Tibial artery (tissue), 4 donors: ENCODE measurements at regions of chr1 and their contacts with region 1.

Region 1: DNA sequence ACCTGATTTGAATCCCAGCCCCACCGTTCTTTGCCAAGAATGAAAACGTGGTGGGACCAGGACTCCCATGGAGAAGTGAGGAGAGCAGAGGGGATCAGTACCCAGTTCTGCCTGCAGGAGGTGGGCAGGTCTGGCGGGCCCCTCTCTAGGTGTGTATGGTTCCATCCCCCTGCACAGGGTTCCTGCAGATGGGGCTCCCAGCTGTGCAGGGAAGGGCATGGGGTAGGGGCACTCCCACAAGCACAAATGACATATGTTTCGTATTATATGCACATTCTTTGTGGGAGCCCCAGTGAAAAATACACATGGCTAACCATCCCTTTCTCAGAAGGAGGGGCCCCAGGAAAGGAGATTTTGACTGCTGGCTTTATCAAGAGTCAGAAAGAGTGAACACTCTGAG is 144.6 kb downstream of the PLPP3 start:
- DNase-seq: no peak
- H3K4me3 ChIP-seq: no peak overlapping the region
- H3K27ac ChIP-seq: no peak overlapping the region
- H3K4me1 ChIP-seq: peaks cover 0 to 17% (median 1%) of the 10 kb centered on the region in 4 donors
- H3K27me3 ChIP-seq: no peaks in the 10 kb centered on the region
- CTCF ChIP-seq: no peak

Region 2: GRCh38 chr1:55943721-55944435 is 490.9 kb before region 1 on chr1:
- intact Hi-C with region 1: loop called (anchors 5 kb)
- DNase-seq: no peak
- H3K4me3 ChIP-seq: no peak overlapping the region
- H3K27ac ChIP-seq: no peak overlapping the region
- H3K4me1 ChIP-seq: no peaks in the 10 kb centered on the region
- H3K27me3 ChIP-seq: no peaks in the 10 kb centered on the region
- CTCF ChIP-seq: no peak